Calu3 (cell line): ENCODE measurements at regions of chr2 and their contacts with region 1.

Region 1: GRCh38 chr2:20411361-20411894 is 35.4 kb upstream of the RHOB start:
- DNase-seq: peak; percentile 89
- H3K4me3 Mint-ChIP-seq: no peak overlapping the region
- H3K27ac Mint-ChIP-seq: no peak overlapping the region
- H3K4me1 Mint-ChIP-seq: no peaks in the 10 kb centered on the region
- H3K27me3 Mint-ChIP-seq: no peaks in the 10 kb centered on the region
- CTCF ChIP-seq: peak; percentile 91

Region 2: GRCh38 chr2:20396356-20397000 is 14.9 kb before region 1 on chr2:
- CTCF ChIA-PET with region 1: interaction called, 10 read pairs
- intact Hi-C with region 1: no loop called
- DNase-seq: no peak
- H3K4me3 Mint-ChIP-seq: no peak overlapping the region
- H3K27ac Mint-ChIP-seq: no peak overlapping the region
- H3K4me1 Mint-ChIP-seq: peaks cover 10% of the 10 kb centered on the region
- H3K27me3 Mint-ChIP-seq: peaks cover 39% of the 10 kb centered on the region
- CTCF ChIP-seq: no peak

Region 3: GRCh38 chr2:20424300-20425290 is 13.2 kb after region 1 on chr2:
- CTCF ChIA-PET with region 1: interaction called, 12 read pairs
- intact Hi-C with region 1: no loop called
- DNase-seq: no peak
- H3K4me3 Mint-ChIP-seq: no peak overlapping the region
- H3K27ac Mint-ChIP-seq: no peak overlapping the region
- H3K4me1 Mint-ChIP-seq: no peaks in the 10 kb centered on the region
- H3K27me3 Mint-ChIP-seq: peaks cover 26% of the 10 kb centered on the region
- CTCF ChIP-seq: no peak

Region 4: DNA sequence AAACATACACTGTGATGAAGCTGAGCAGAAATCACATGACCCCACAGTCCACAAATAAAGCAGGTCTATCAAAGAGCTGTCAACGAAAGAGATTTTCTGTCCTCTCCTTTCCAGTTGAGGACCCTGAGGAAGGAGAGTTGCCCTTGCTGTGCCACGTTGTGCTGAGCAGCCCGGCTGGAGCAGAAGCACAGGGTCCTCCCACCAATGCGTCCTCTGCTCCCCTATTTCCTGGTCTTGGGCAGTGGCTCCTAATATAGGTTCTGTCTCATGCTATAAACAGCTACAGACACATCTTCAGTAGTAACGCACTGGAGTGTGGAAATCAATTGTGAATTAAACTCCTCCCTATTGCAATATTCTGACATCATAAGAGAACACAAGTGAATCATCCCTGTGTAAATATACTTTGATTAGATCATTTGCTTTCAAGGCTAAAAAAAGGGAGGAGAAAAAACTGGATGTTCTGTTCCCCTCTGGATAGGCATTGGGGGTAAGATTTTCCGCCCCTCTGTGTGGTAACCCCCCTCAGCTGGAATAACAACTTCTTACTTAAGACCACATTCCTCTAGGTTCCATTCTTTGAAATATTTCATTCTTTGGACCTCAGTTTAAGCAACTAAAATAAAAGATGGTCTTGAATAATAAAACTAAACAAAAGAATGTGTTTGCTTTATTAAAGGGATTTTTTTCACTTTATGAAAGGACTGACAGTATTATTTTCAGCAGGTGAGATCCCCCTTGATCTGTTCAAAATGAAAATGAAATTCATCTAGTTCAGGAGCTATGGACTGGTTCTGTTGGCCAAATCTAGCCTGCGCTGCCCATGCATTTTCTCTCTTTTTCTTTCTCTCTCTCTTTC is 27.1 kb after region 1 on chr2:
- CTCF ChIA-PET with region 1: interaction called, 27 read pairs
- intact Hi-C with region 1: loop called (anchors 2 kb)
- DNase-seq: peak; percentile 49
- H3K4me3 Mint-ChIP-seq: peak overlapping the region; percentile 35
- H3K27ac Mint-ChIP-seq: peak overlapping the region; percentile 55
- H3K4me1 Mint-ChIP-seq: peaks cover 18% of the 10 kb centered on the region
- H3K27me3 Mint-ChIP-seq: no peaks in the 10 kb centered on the region
- CTCF ChIP-seq: no peak

Region 5: GRCh38 chr2:20446917-20447436 is 35.5 kb after region 1 on chr2 and contains the start of gene RHOB:
- CTCF ChIA-PET with region 1: interaction called, 20 read pairs
- intact Hi-C with region 1: no loop called
- DNase-seq: peak; percentile 98
- H3K4me3 Mint-ChIP-seq: peak within 1 kb of the TSS; percentile 89
- H3K27ac Mint-ChIP-seq: peak within 1 kb of the TSS; percentile 87
- H3K4me1 Mint-ChIP-seq: peaks cover 38% of the 10 kb centered on the region
- H3K27me3 Mint-ChIP-seq: no peaks in the 10 kb centered on the region
- CTCF ChIP-seq: no peak
- total RNA-seq, gene RHOB: 143 and 147 TPM in 2 replicates

Region 6: DNA sequence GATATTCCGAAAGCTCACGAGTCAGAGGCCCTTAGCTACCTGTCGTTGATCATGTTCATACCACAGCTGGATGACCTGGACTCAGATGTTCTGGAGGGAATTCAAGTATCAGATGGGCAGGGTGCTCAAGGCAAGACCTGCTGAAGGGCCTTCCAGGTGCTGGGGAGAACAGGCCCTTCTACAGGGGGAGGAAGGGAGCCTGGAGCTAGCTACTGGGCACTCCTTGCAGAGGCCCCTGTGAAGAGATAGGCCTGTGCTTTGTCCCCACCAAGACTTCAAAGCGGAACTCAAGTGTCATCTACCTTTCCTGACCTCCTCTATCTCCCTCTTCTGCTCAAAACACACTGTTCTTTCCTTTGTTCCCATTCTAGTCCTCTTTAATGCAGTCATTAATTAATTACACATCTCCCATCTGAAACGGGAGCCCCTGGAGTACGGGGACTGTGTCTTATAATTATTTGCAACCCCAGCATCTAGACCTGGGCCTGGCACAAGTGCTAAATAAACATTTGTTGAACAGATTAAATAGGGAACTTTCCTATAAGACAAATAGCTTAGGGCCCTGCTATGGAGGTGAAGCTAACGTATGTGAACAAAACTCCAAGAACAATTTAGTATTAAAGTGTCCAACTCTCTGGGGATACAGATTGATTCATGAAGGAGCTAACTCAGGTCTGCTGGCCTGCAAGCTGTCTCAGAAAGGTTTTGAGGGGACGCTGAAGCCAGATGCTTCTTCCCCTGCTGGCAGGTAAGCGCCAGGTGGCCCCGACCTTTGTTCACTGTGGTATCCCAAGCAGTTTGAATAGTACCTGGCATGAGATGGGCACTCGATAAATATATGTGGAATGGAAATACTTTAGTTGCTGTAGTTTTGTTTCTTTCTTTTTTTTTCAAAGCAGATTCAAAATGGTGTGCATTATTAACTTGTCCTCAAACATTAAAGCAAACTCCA is 57.4 kb after region 1 on chr2:
- CTCF ChIA-PET with region 1: no interaction called
- intact Hi-C with region 1: no loop called
- DNase-seq: no peak
- H3K4me3 Mint-ChIP-seq: no peak overlapping the region
- H3K27ac Mint-ChIP-seq: no peak overlapping the region
- H3K4me1 Mint-ChIP-seq: no peaks in the 10 kb centered on the region
- H3K27me3 Mint-ChIP-seq: no peaks in the 10 kb centered on the region
- CTCF ChIP-seq: no peak

Region 7: GRCh38 chr2:20642055-20642971 is 230.9 kb after region 1 on chr2:
- CTCF ChIA-PET with region 1: interaction called, 25 read pairs
- intact Hi-C with region 1: no loop called
- DNase-seq: peak; percentile 89
- H3K4me3 Mint-ChIP-seq: no peak overlapping the region
- H3K27ac Mint-ChIP-seq: no peak overlapping the region
- H3K4me1 Mint-ChIP-seq: peaks cover 10% of the 10 kb centered on the region
- H3K27me3 Mint-ChIP-seq: no peaks in the 10 kb centered on the region
- CTCF ChIP-seq: peak; percentile 96

Region 8: DNA sequence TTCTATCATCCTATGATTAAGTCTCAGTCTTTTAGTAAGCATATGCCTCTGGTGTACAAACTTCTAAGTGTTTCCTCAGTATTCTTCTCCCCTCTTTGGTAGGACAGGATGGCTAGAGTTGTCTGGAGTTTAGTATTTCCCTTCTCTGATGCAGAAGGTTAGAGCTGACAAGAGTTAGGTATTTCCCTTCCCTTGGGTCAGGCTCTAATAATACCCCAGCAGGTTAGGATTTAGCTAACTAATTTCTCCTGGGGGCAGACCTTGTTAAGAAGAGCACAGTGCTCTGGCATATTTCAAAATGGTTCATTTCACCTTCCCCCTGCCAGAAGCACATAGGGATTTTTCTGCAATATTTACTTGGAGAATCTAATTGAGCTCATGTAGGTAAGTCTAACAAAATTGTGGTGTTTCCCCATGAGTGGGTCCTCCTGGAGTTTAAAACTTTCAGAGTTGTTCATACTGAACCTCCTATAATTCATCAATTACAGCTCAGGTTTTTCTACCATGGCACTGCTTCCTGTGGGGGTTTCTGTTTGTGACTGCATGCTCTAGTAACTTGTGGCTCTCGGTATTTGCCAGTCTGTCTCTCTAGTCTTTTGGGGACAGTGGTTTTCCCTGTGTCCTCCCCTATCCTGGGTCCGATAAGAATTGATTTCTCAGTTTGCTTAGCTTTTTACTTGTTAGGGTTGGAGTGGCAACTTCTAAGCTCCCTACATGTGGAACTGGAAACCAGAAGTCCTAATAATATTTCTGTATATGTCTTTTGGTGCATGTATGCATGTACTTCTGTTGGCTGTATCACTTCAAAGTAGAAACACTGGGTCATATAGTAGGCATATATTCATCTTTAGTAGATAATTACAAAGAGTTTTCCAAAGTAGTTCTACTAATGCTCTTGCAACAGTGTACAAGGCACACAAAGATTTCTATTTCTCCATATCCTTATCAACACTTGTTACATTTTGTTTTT is 333.2 kb after region 1 on chr2:
- CTCF ChIA-PET with region 1: no interaction called
- intact Hi-C with region 1: loop called (anchors 10 kb)
- DNase-seq: no peak
- H3K4me3 Mint-ChIP-seq: no peak overlapping the region
- H3K27ac Mint-ChIP-seq: no peak overlapping the region
- H3K4me1 Mint-ChIP-seq: peaks cover 20% of the 10 kb centered on the region
- H3K27me3 Mint-ChIP-seq: no peaks in the 10 kb centered on the region
- CTCF ChIP-seq: no peak